K562 (cell line): ENCODE measurements at regions of chr18 and their contacts with region 1.

Region 1: GRCh38 chr18:26405190-26405801 is 143.1 kb downstream of the KCTD1 start:
- DNase-seq: peak in 1 of 4 experiments; percentile 16
- ATAC-seq: peak; percentile 28
- H3K4me3 ChIP-seq: no peak overlapping the region
- H3K27ac ChIP-seq: no peak overlapping the region
- H3K4me1 ChIP-seq: peaks cover 0 to 3% of the 10 kb centered on the region in 2 experiments; a peak in 1 of 5 replicates
- H3K27me3 ChIP-seq: peaks cover 20 to 32% of the 10 kb centered on the region in 2 experiments; a peak in 4 of 5 replicates
- CTCF ChIP-seq: peak in 2 of 3 experiments; percentile 21 to 28; a peak in 1 of 6 replicates
- EP300 ChIP-seq: no peak
- POLR2A ChIP-seq: no peak
- RAD21 ChIP-seq: peak in 1 of 2 experiments; percentile 29; a peak in 1 of 4 replicates

Region 2: DNA sequence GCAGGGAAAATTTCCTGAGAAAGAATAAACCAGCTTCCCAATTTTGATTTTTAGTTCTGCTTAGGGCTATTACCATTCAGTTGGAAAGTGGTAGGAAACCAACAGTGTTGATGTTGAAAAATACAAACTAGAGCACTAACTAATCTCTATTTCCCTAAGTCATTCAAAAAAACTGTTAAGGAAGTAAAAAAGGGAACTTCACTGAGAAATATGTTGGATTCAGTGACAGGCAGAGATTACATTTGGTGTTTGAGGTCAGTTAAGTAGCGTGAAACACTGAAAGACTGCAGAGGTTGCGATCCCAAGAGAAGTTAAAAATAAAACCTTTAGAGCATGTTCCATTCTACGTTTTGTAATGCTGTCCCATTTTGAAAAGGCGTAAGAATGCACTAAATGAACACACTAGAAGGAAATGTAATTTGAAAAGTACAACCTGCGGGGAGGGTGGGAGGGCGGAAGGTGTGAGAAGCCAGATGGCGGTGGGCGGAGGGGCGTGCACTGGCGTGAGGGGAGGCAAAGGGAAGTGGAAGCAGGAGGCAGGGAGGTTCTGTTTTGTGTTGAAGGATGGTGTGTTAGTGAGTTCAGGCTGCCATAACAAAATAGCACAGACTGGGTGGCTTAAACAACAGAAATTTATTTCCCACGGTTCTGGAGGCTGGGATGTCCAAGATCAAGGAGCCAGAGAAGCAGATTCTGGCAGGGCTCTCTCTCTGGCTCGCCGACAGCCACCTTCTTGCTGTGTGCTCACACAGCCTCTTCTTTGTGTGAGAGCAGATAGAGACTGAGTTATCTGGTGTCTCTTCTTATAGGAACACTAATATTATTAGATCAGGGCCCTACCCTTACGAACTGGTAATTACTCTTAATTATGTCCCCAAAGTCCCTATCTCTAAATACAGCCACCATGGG is 237.4 kb after region 1 on chr18:
- CTCF ChIA-PET with region 1: no interaction called
- POLR2A ChIA-PET with region 1: interaction called, 4 read pairs
- in situ Hi-C with region 1: no loop called
- intact Hi-C with region 1: loop called (anchors 10 kb)
- DNase-seq: no peak
- ATAC-seq: no peak
- H3K4me3 ChIP-seq: no peak overlapping the region
- H3K27ac ChIP-seq: no peak overlapping the region
- H3K4me1 ChIP-seq: no peaks in the 10 kb centered on the region
- H3K27me3 ChIP-seq: no peaks in the 10 kb centered on the region
- CTCF ChIP-seq: no peak
- EP300 ChIP-seq: no peak
- POLR2A ChIP-seq: no peak
- RAD21 ChIP-seq: no peak